ENCODE measurements at regions of chr16 and their contacts with region 1.

Region 1: DNA sequence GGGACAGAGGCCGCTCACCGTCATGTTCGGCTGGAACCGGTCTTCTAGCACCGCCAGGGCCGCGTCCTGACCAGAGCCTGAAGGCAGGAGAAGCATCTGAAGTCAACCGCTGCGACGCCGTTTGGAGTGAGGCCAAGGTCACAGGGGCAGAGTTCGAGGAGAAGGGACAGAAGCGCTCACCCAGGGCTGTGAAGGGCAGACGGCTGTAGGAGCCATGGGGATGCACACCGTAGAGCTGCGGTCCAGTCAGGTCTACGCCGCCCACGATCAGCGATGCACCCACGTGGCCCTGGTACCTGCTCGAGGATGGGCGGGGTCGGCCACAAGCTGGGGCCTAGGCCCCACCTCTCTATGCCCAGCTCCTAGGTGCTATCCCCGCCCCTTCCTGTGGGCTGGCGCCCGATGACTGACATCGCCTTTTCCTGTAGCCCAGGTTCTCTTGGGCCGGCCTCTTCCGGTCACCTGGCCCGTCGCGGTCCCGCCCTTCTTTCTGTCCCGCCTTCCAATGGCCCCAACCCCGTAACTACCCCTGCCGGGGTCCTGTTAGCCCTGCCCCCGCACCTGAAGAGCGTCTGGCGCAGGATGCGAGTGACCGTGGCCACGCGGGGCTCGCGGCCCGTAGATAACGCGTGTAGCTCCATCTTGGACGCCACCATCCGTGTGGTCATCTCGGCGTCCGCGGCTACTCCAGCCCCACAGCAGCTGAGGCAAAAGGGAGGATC is 1.1 kb downstream of the PSMB10 start:
- DNase-seq: peak; percentile 97
- H3K4me3 Mint-ChIP-seq: peak overlapping the region; percentile 100
- H3K27ac Mint-ChIP-seq: peak overlapping the region; percentile 97
- H3K4me1 Mint-ChIP-seq: peaks cover 44% of the 10 kb centered on the region
- H3K27me3 Mint-ChIP-seq: no peaks in the 10 kb centered on the region

Region 2: GRCh38 chr16:67833418-67834241 is 101.9 kb before region 1 on chr16:
- CTCF ChIA-PET with region 1: no interaction called
- POLR2A ChIA-PET with region 1: interaction called, 22 read pairs
- DNase-seq: peak; percentile 96
- H3K4me3 Mint-ChIP-seq: peak overlapping the region; percentile 84
- H3K27ac Mint-ChIP-seq: peak overlapping the region; percentile 77
- H3K4me1 Mint-ChIP-seq: peaks cover 22% of the 10 kb centered on the region
- H3K27me3 Mint-ChIP-seq: no peaks in the 10 kb centered on the region

Region 3: DNA sequence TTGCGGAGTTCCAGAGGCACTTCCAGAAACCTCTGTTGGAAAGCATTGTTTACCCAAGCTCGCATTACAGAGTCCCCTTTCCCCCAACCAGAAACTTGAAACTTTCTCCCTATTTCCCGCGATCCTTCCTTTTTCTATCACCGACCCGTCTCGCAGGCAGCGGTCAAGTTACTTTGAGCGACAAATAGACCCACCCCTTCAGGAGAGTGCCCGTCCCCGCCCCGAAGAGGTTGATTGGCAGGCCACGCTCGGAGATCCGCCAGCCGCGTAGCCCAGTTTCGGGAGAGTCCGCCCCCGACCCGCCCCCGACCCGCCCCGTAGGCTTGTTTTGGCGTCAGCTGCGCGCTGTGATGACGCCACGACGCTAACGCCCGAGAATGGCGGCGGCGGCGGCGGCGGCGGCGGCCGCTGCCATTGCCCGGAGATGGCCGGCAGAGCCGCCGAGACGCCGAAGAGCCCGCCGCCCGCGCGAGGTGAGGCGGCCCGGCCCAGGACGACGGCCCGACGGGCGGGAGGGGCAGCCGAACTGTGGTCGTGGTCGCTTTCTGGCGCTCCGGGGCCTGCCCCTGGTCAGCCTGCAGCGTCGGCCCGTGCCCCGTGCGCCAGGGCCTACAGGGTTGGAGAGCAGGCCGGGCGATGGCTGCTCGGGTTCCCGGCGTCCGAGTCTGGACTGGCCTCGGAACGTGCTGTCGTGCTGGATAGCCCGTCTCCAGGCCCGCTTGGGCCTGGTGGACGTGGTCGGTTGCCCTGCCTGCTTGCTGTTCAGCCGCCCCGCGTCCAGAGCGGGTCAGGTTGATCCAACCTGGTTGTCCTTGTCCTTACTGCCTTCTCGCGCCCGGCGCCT is 42.4 kb before region 1 on chr16 and contains the start of gene PSKH1:
- CTCF ChIA-PET with region 1: interaction called, 3 read pairs
- POLR2A ChIA-PET with region 1: interaction called, 32 read pairs
- DNase-seq: peak; percentile 96
- H3K4me3 Mint-ChIP-seq: peak within 1 kb of the TSS; percentile 94
- H3K27ac Mint-ChIP-seq: peak within 1 kb of the TSS; percentile 94
- H3K4me1 Mint-ChIP-seq: peaks cover 26% of the 10 kb centered on the region
- H3K27me3 Mint-ChIP-seq: no peaks in the 10 kb centered on the region
- total RNA-seq, gene PSKH1: 19.0 TPM

Region 4: GRCh38 chr16:67968400-67969253 is 33.1 kb after region 1 on chr16 and contains the start of gene SLC12A4:
- CTCF ChIA-PET with region 1: no interaction called
- POLR2A ChIA-PET with region 1: interaction called, 41 read pairs
- DNase-seq: peak; percentile 89
- H3K4me3 Mint-ChIP-seq: peak within 1 kb of the TSS; percentile 100
- H3K27ac Mint-ChIP-seq: peak within 1 kb of the TSS; percentile 95
- H3K4me1 Mint-ChIP-seq: peaks cover 26% of the 10 kb centered on the region
- H3K27me3 Mint-ChIP-seq: no peaks in the 10 kb centered on the region
- total RNA-seq, gene SLC12A4: 37.9 to 40.0 TPM

Region 5: DNA sequence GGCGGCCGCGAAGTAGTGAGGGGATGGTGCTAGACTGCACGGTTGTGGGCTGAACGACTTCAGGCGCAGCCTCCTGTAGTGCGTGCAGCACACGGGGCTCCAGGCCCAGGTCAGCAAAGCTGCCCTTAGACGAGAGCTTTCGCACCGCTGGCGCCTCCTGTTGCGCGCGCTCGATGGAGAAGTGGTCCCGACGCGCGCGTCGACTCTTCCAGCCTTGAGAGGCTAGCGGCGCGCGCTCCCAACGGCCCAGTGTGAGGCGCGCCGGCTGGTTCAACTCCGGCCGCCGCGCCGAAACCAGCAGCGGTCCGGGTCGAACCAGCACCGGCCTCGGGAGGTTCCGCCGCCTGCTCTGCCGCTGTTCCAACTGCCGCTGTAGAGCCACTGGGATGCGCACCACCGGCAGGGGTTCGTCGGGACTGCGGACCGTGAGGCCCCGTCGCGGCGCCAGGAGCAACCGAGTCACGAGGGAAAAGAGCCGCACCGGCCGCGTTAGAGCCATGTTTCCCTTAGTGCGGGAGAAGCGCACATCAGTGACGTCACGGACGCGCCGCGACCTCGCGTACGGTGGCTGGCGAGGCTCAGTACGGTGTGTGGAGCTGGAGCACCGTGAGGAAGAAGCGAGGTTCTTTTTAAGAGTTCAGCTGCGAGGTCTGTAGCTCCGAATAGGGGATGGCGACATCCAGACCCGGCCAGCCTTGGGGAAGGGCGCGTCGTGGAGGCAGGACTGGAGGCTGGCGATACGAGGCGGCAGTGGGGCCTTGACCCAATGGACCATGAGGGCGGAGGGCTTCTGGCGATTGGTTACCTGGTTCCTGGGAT is 87.3 kb after region 1 on chr16 and contains the starts of genes DDX28 and DUS2:
- CTCF ChIA-PET with region 1: interaction called, 8 read pairs
- POLR2A ChIA-PET with region 1: interaction called, 21 read pairs
- DNase-seq: peak; percentile 95
- H3K4me3 Mint-ChIP-seq: peak within 1 kb of the TSS; percentile 96
- H3K27ac Mint-ChIP-seq: peak within 1 kb of the TSS; percentile 89
- H3K4me1 Mint-ChIP-seq: peaks cover 35% of the 10 kb centered on the region
- H3K27me3 Mint-ChIP-seq: no peaks in the 10 kb centered on the region
- total RNA-seq, gene DDX28: 11.6 to 12.3 TPM
- total RNA-seq, gene DUS2: 23.8 to 24.4 TPM

Region 6: GRCh38 chr16:68074850-68075555 is 139.4 kb after region 1 on chr16:
- CTCF ChIA-PET with region 1: interaction called, 3 read pairs
- POLR2A ChIA-PET with region 1: interaction called, 17 read pairs
- DNase-seq: peak; percentile 94
- H3K4me3 Mint-ChIP-seq: peak overlapping the region; percentile 58
- H3K27ac Mint-ChIP-seq: peak overlapping the region; percentile 95
- H3K4me1 Mint-ChIP-seq: peaks cover 89% of the 10 kb centered on the region
- H3K27me3 Mint-ChIP-seq: no peaks in the 10 kb centered on the region

Measured in activated CD4-positive, alpha-beta memory T cell treated with anti-CD3 and anti-CD28 coated beads, Interleukin-2, amount 10 ng/mL, durations not matched to agents 7 days and 5 days (primary cell).